RWPE1 (cell line): ENCODE measurements at regions of chr1 and their contacts with region 1.

Region 1: DNA sequence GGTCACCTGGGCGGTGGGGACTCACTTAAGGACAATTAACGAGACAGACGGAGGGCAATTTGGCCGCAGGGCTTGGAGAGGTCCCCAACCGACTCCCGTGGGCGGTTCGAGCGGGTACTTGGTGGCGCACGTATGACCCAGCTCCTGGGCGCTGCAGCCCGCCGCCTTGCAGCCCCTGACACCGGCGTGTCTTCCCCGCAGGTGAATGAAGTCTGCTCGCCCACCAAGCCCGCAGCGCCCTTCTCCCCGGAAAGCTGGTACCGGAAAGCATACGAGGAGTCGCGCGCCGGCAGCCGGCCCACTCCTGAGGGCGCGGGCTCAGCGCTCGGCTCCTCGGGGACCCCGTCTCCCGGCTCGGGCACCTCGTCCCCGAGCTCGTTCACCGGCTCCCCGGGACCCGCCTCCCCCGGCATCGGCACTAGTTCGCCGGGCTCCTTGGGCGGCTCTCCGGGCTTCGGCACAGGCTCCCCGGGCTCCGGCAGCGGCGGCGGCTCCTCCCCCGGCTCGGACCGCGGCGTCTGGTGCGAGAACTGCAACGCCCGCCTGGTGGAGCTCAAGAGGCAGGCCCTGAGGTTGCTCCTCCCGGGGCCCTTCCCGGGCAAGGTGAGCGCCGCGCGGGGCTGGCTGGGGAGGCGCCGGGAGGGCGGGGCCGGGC is 1.4 kb downstream of the KIF26B start:
- DNase-seq: peak; percentile 89
- H3K27ac ChIP-seq: no peak overlapping the region
- CTCF ChIP-seq: peak; percentile 84

Region 2: GRCh38 chr1:245108909-245109308 is 47.3 kb before region 1 on chr1:
- CTCF ChIA-PET with region 1: interaction called, 3 read pairs
- POLR2A ChIA-PET with region 1: interaction called, 11 read pairs
- DNase-seq: no peak
- H3K27ac ChIP-seq: no peak overlapping the region
- CTCF ChIP-seq: no peak

Region 3: DNA sequence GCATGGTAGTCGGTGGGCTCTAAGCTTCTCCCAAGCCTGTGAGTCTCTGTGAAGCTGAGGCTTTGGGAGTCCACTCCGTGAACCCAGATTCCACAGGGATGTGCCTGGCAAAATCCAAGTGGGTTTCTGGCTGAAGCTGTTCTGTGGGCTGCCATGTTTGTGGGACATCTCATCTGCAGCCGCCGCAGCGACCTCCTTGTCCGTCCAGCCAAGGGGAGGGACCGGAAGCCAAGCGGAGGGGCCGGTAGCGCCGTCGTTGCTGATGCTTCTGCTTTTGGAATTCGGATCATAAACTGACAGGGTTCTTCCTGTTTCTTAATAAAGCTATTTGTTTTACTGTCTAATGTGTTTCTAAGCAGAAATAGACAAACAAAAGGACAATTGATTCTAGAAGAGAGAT is 11.9 kb after region 1 on chr1:
- CTCF ChIA-PET with region 1: interaction called, 10 read pairs
- POLR2A ChIA-PET with region 1: no interaction called
- DNase-seq: no peak
- H3K27ac ChIP-seq: no peak overlapping the region
- CTCF ChIP-seq: no peak